ENCODE measurements at regions of chr2 and their contacts with region 1.

Region 1: GRCh38 chr2:235766278-235766677 is 272.4 kb downstream of the AGAP1 start:
- DNase-seq: peak; percentile 59
- ATAC-seq: peak; percentile 91
- H3K4me3 Mint-ChIP-seq: no peak overlapping the region
- H3K27ac Mint-ChIP-seq: no peak overlapping the region; the same call in 1 of the 2 replicates
- H3K4me1 Mint-ChIP-seq: no peaks in the 10 kb centered on the region
- H3K27me3 Mint-ChIP-seq: no peaks in the 10 kb centered on the region
- CTCF ChIP-seq: peak; percentile 95

Region 2: DNA sequence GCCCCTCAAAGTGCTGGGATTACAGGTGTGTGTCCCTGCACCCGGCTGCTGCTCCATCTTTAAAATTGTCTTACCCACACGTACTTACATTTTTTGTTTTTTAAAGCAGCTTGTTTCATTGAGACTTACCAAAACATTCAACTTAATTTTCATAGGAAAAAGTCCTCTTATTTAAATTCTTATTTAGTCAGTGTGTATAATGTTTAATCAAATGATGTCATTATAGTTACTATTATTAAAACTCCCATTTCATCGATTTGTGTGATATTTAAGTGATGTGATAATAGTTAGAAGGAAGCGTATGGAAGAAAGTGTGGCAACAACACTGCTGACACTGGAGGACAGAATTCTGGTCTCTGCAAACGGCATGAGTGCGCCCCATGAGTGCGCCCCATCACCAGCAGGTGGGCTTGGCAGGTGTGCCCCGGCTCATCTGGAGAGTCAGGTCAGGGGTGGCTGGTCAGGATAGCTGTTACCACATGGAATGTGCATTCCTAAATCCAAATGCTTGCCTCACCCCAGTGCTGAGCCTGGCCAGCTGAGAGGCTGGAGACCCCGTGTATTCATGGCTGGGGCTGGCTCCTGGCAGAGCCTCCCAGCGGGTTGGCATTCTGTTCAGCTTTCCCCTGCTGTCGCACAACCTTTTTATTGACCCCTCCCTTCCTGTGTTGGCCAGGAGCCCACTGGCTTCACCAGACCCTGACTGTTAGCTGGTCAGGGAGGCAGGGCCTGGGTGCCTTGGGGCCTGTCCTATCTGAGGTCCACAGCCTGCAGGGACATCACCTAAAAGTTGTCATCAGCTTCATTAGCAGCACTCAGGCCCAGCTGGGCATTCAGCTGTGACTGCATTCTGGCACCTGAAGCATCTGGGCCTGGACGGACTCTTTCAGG is 192.7 kb before region 1 on chr2:
- CTCF ChIA-PET with region 1: no interaction called
- POLR2A ChIA-PET with region 1: no interaction called
- DNase-seq: no peak
- ATAC-seq: peak; percentile 51
- H3K4me3 Mint-ChIP-seq: no peak overlapping the region
- H3K27ac Mint-ChIP-seq: no peak overlapping the region; the same call in 1 of the 2 replicates
- H3K4me1 Mint-ChIP-seq: peaks cover 78% of the 10 kb centered on the region
- H3K27me3 Mint-ChIP-seq: no peaks in the 10 kb centered on the region
- CTCF ChIP-seq: no peak

Region 3: GRCh38 chr2:235725016-235725489 is 41.2 kb before region 1 on chr2:
- CTCF ChIA-PET with region 1: no interaction called
- POLR2A ChIA-PET with region 1: no interaction called
- DNase-seq: no peak
- ATAC-seq: no peak
- H3K4me3 Mint-ChIP-seq: no peak overlapping the region
- H3K27ac Mint-ChIP-seq: no peak overlapping the region
- H3K4me1 Mint-ChIP-seq: peaks cover 31% of the 10 kb centered on the region
- H3K27me3 Mint-ChIP-seq: no peaks in the 10 kb centered on the region
- CTCF ChIP-seq: no peak

Region 4: DNA sequence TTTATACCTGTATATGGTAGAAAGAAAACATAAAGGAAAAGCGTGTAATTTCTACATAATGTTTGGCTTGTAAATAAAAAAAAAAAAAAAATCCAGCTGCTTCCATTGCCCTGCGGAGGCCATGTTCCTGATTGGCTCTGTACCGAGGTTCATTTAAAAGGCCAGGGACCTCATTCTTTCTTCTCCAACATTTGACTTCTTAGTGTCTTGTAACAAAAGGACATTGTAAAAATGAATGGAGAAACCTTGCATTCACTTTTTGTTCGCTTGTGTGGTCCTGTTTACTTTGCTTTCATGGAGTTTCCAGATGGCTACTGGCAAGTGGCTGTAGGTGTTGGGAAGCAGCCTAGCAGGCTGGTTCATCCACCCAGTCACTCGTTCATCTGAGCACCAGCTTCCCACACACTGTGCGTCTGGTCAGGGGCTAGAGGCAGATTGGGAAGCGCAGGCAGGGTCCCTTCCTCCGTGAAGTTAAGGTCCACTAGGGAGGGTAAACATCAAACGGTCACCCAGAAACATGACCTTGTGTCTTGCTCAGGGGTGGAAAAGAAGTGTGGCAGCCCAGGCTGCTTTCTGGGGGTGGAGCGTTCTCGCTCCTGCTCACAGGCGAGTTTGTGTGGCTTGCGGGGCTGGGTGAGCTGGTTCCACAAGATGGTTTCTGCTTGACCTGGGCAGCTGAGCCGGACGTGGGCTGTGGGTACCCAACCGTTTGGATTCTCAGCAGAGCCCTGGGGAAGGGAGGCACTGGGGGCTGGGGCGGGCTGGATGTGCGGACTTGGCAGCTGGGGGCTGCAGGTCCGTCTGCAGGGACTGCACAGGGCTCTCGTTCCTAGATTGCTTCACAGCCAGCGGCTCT is 11.7 kb before region 1 on chr2:
- CTCF ChIA-PET with region 1: interaction called, 20 read pairs
- POLR2A ChIA-PET with region 1: no interaction called
- DNase-seq: no peak
- ATAC-seq: peak; percentile 21; the same call in 1 of the 2 replicates
- H3K4me3 Mint-ChIP-seq: no peak overlapping the region
- H3K27ac Mint-ChIP-seq: 0 out of 2 replicates have a peak overlapping the region, but pooled peaks have one; percentile 41
- H3K4me1 Mint-ChIP-seq: peaks cover 33% of the 10 kb centered on the region
- H3K27me3 Mint-ChIP-seq: no peaks in the 10 kb centered on the region
- CTCF ChIP-seq: no peak

Region 5: DNA sequence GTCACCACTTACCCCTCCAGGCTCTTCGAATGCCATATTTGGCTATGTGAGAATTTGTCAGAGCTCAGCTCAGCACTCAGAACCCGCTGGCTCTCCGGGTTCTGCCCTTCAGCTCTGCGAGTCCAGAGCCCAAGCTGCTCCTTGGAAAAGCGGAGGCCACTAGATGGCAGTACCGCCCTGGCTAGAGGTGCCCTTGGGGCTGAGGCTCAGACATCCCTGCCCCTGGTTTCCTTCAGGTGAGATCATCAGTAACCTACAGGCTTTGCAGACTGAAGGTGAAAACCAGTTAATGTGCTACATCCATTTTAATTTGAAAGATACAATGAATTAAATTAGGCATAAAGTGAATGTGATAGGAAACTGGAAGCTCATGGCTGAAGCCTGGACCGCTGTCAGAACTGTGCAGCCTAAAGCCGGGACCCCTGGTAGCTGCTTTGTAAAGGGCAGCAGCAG is 13.2 kb after region 1 on chr2:
- CTCF ChIA-PET with region 1: interaction called, 47 read pairs
- POLR2A ChIA-PET with region 1: no interaction called
- DNase-seq: peak; percentile 92
- ATAC-seq: peak; percentile 98
- H3K4me3 Mint-ChIP-seq: no peak overlapping the region
- H3K27ac Mint-ChIP-seq: peak overlapping the region; percentile 24; the same call in 1 of the 2 replicates
- H3K4me1 Mint-ChIP-seq: peaks cover 13% of the 10 kb centered on the region
- H3K27me3 Mint-ChIP-seq: no peaks in the 10 kb centered on the region
- CTCF ChIP-seq: peak; percentile 53; the same call in 1 of the 2 replicates

Region 6: GRCh38 chr2:235793163-235793752 is 27.0 kb after region 1 on chr2:
- CTCF ChIA-PET with region 1: interaction called, 12 read pairs
- POLR2A ChIA-PET with region 1: no interaction called
- DNase-seq: peak; percentile 60
- ATAC-seq: peak; percentile 93
- H3K4me3 Mint-ChIP-seq: no peak overlapping the region
- H3K27ac Mint-ChIP-seq: no peak overlapping the region
- H3K4me1 Mint-ChIP-seq: peaks cover 22% of the 10 kb centered on the region
- H3K27me3 Mint-ChIP-seq: no peaks in the 10 kb centered on the region
- CTCF ChIP-seq: peak; percentile 30

Region 7: DNA sequence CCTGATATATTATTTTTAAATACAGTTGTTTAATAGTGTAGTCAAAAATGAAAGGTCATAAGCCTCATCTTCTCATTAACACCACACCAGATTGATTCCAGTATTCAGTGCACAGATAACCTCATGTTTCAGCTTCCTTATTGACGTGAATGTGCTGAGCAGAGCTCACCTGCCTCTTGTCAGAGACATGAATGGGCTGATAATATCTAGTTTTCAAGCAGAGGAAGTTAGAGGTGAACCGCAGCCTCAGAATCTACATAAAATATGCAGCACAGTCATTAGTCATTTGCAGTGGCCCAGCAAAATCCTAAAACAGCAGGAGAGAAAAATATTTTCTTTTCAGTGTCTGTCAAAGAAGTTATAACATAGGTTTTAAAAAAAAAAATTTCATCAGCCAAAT is 185.7 kb after region 1 on chr2:
- CTCF ChIA-PET with region 1: interaction called, 12 read pairs
- POLR2A ChIA-PET with region 1: no interaction called
- DNase-seq: no peak
- ATAC-seq: no peak
- H3K4me3 Mint-ChIP-seq: no peak overlapping the region
- H3K27ac Mint-ChIP-seq: no peak overlapping the region
- H3K4me1 Mint-ChIP-seq: peaks cover 40% of the 10 kb centered on the region
- H3K27me3 Mint-ChIP-seq: no peaks in the 10 kb centered on the region
- CTCF ChIP-seq: no peak